GM10248 (cell line): ENCODE measurements at regions of chr10 and their contacts with region 1.

Region 1: GRCh38 chr10:88835096-88835909 is 16.3 kb downstream of the ANKRD22 start:
- DNase-seq: peak; percentile 55
- CTCF ChIP-seq: peak; percentile 89

Region 2: DNA sequence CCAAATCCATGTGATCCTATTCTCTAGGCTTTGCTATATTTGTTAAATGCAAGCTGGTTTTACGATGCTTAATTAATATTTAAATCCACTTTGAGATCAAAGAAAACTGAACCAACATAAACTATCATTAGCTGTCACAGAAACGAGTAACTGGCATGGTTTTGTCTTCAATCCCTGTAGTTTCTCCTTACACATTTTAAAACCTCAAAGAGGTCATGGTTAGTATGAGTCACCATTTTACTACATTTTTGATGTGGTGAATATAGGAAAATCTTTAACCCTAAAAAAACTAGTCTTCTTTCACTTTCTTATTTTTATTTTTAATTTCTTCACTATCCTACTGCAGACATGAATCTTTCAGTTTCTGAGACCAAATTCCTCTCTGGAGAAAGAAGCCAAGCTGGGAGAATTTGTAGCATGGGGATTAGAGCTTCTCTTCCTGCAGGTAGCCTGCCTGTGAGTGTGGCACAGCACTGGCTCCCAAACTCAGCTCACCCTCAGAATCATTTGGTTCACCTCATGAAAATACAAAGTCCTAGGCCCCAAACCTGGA is 41.5 kb before region 1 on chr10:
- CTCF ChIA-PET with region 1: no interaction called
- POLR2A ChIA-PET with region 1: no interaction called
- DNase-seq: peak; percentile 28
- CTCF ChIP-seq: no peak

Region 3: GRCh38 chr10:88810196-88810961 is 24.9 kb before region 1 on chr10:
- CTCF ChIA-PET with region 1: interaction called, 20 read pairs
- POLR2A ChIA-PET with region 1: no interaction called
- DNase-seq: peak; percentile 35
- CTCF ChIP-seq: peak; percentile 62

Region 4: GRCh38 chr10:88851706-88852105 is 16.4 kb after region 1 on chr10 and contains the start of gene ANKRD22:
- CTCF ChIA-PET with region 1: interaction called, 50 read pairs
- POLR2A ChIA-PET with region 1: no interaction called
- DNase-seq: no peak
- CTCF ChIP-seq: no peak

Region 5: GRCh38 chr10:88880282-88881076 is 45.2 kb after region 1 on chr10:
- CTCF ChIA-PET with region 1: interaction called, 27 read pairs
- POLR2A ChIA-PET with region 1: no interaction called
- DNase-seq: peak; percentile 76
- CTCF ChIP-seq: peak; percentile 29

Region 6: GRCh38 chr10:88901206-88901983 is 66.1 kb after region 1 on chr10:
- CTCF ChIA-PET with region 1: interaction called, 39 read pairs
- POLR2A ChIA-PET with region 1: no interaction called
- DNase-seq: peak; percentile 44
- CTCF ChIP-seq: no peak

Region 7: DNA sequence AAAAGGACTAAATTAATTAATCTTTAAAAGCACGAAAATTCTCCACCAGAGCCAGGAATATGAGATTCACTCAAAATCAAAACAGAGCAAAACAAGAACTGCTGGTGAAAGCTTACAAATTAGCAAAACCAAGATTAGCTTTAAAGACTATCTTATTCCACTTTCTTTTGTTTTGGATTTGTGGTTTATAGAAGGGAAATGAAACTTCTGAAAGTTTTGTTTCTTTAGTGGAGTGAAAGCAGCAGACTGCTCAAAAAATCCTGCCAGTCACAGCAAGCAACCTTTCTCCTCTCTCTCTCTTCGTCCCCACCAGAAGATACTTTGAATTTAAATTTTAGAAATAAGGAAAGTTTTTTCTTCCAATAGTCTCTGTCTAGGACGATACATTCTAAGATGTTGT is 109.5 kb after region 1 on chr10:
- CTCF ChIA-PET with region 1: interaction called, 11 read pairs
- POLR2A ChIA-PET with region 1: no interaction called
- DNase-seq: peak; percentile 35
- CTCF ChIP-seq: no peak

Region 8: GRCh38 chr10:89217057-89217990 is 382.0 kb after region 1 on chr10:
- CTCF ChIA-PET with region 1: interaction called, 13 read pairs
- POLR2A ChIA-PET with region 1: no interaction called
- DNase-seq: peak; percentile 42
- CTCF ChIP-seq: peak; percentile 61